CD4-positive, alpha-beta T cell (primary cell): ENCODE measurements at regions of chrX and their contacts with region 1.

Region 1: DNA sequence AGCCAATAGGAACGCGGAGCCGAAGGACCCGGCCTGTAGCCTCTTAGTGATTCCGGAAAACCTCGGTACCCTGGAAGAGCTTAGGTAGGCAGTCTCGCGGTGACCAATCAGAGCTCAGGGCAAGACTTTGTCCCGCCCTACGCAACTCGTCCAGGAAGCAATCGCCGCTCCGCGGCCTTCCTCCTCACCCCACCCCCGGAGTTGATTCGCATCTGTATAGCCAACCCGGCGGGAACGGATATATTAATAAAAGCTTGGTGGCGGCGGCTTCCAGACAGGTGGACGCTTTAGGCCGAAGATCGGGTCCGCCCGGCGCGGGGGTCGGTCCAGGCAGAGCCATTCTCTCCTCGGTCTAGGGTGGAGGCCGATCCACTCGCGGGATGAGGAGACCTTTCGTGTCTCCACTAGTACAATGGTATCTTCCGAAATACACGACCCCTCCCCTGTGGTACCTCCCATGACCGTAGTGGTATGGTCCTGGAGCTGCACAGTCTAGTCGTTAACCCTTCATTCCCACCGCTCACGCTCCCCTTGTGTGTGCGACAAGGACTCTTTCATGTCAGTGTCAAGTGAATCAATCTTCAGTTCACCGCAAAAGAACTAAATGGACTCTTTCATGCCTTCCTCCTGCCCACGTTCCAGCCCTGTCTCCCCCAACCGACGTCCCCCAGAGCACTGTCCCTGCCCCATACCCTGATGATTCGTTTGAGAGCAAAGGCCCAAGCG is 24.2 kb upstream of the GLOD5 start:
- DNase-seq: peak; percentile 72 to 97 (median 84)
- ATAC-seq: peak; percentile 94
- H3K4me3 ChIP-seq: peak overlapping the region; percentile 74
- H3K4me3 Mint-ChIP-seq: peak overlapping the region; percentile 92
- H3K27ac ChIP-seq: peak overlapping the region; percentile 76 to 92
- H3K27ac Mint-ChIP-seq: peak overlapping the region; percentile 96
- H3K4me1 ChIP-seq: peaks cover 17% of the 10 kb centered on the region
- H3K4me1 Mint-ChIP-seq: peaks cover 24% of the 10 kb centered on the region
- H3K27me3 ChIP-seq: no peaks in the 10 kb centered on the region
- H3K27me3 Mint-ChIP-seq: no peaks in the 10 kb centered on the region
- CTCF ChIP-seq: no peak

Region 2: GRCh38 chrX:48676106-48676892 is 61.1 kb before region 1 on chrX:
- CTCF ChIA-PET with region 1: no interaction called
- POLR2A ChIA-PET with region 1: interaction called, 18 read pairs
- intact Hi-C with region 1: loop called (anchors 1 to 5 kb)
- DNase-seq: peak; percentile 74 to 94 (median 86)
- ATAC-seq: peak; percentile 96
- H3K4me3 ChIP-seq: peak overlapping the region; percentile 79
- H3K4me3 Mint-ChIP-seq: peak overlapping the region; percentile 95
- H3K27ac ChIP-seq: peak overlapping the region; percentile 64
- H3K27ac Mint-ChIP-seq: peak overlapping the region; percentile 96
- H3K4me1 ChIP-seq: peaks cover 28% of the 10 kb centered on the region
- H3K4me1 Mint-ChIP-seq: peaks cover 18% of the 10 kb centered on the region
- H3K27me3 ChIP-seq: no peaks in the 10 kb centered on the region
- H3K27me3 Mint-ChIP-seq: no peaks in the 10 kb centered on the region
- CTCF ChIP-seq: no peak

Region 3: DNA sequence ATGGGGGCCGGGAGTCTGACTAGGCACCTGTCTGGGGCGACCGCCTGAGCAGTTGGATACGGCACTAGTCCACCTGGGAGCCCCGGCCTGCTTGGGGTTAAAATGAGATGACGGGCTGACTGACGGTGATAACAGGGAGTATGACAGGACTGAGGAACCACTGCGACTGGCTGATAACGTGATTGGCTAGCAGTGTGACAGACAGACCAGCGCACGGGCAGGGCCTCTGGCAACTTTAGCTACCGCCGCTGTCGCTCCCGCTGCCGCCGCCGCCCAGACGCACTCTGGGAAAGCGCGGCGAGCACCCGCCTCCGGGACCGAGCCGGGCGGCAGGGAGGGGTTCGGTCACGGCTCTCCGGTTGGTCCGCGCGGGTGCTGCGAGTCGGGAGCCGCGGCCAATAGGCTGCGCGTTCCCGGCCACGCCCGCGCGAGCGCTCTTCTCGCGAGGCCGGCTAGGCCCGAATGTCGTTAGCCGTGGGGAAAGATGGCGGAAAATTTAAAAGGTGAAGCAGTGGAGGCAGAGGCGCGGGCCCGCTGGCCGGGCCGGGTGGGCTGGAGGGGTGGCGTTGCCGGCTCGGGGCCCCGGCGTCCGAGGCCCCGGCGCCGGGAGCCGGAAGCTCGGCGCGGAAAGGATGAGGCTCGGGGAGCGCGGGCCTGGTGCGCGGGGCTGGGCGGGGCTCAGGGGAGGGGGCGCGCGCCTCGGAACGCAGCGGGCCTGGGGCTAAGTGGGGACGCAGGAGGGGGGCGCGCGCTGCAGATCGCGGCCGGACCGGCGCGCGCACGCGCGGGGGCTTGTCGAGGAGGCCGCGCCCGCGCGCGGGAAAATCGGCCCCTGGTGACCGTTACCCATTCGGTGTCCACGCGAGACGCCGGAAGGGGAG is 40.8 kb before region 1 on chrX and contains the start of gene SUV39H1:
- CTCF ChIA-PET with region 1: no interaction called
- POLR2A ChIA-PET with region 1: interaction called, 46 read pairs
- intact Hi-C with region 1: loop called (anchors 2 kb)
- DNase-seq: peak; percentile 66 to 95 (median 80)
- ATAC-seq: peak; percentile 93
- H3K4me3 ChIP-seq: peak within 1 kb of the TSS; percentile 65
- H3K4me3 Mint-ChIP-seq: peak within 1 kb of the TSS; percentile 98
- H3K27ac ChIP-seq: peak within 1 kb of the TSS; percentile 72 to 75
- H3K27ac Mint-ChIP-seq: peak within 1 kb of the TSS; percentile 98
- H3K4me1 ChIP-seq: peaks cover 17% of the 10 kb centered on the region
- H3K4me1 Mint-ChIP-seq: peaks cover 24% of the 10 kb centered on the region
- H3K27me3 ChIP-seq: no peaks in the 10 kb centered on the region
- H3K27me3 Mint-ChIP-seq: no peaks in the 10 kb centered on the region
- CTCF ChIP-seq: no peak
- total RNA-seq, gene SUV39H1: 7.7 to 8.4 TPM

Region 4: GRCh38 chrX:48726596-48726995 is 10.8 kb before region 1 on chrX:
- CTCF ChIA-PET with region 1: no interaction called
- POLR2A ChIA-PET with region 1: interaction called, 14 read pairs
- intact Hi-C with region 1: no loop called
- DNase-seq: peak in 2 of 14 experiments; percentile 28 to 39
- ATAC-seq: peak; percentile 80
- H3K4me3 ChIP-seq: no peak overlapping the region
- H3K4me3 Mint-ChIP-seq: no peak overlapping the region
- H3K27ac ChIP-seq: no peak overlapping the region
- H3K27ac Mint-ChIP-seq: peak overlapping the region; percentile 41
- H3K4me1 ChIP-seq: peaks cover 22% of the 10 kb centered on the region
- H3K4me1 Mint-ChIP-seq: peaks cover 41% of the 10 kb centered on the region
- H3K27me3 ChIP-seq: no peaks in the 10 kb centered on the region
- H3K27me3 Mint-ChIP-seq: no peaks in the 10 kb centered on the region
- CTCF ChIP-seq: no peak

Region 5: GRCh38 chrX:48917139-48918001 is 180.0 kb after region 1 on chrX:
- CTCF ChIA-PET with region 1: no interaction called
- POLR2A ChIA-PET with region 1: no interaction called
- intact Hi-C with region 1: loop called in 1 of 2 experiments (anchors 10 kb)
- DNase-seq: peak; percentile 79 to 94 (median 86)
- ATAC-seq: peak; percentile 33
- H3K4me3 ChIP-seq: peak overlapping the region; percentile 89
- H3K4me3 Mint-ChIP-seq: peak overlapping the region; percentile 98
- H3K27ac ChIP-seq: peak overlapping the region; percentile 61 to 80
- H3K27ac Mint-ChIP-seq: peak overlapping the region; percentile 95
- H3K4me1 ChIP-seq: peaks cover 69% of the 10 kb centered on the region
- H3K4me1 Mint-ChIP-seq: peaks cover 56% of the 10 kb centered on the region
- H3K27me3 ChIP-seq: no peaks in the 10 kb centered on the region
- H3K27me3 Mint-ChIP-seq: no peaks in the 10 kb centered on the region
- CTCF ChIP-seq: peak; percentile 79